ENCODE measurements at regions of chr18 and their contacts with region 1.

Region 1: DNA sequence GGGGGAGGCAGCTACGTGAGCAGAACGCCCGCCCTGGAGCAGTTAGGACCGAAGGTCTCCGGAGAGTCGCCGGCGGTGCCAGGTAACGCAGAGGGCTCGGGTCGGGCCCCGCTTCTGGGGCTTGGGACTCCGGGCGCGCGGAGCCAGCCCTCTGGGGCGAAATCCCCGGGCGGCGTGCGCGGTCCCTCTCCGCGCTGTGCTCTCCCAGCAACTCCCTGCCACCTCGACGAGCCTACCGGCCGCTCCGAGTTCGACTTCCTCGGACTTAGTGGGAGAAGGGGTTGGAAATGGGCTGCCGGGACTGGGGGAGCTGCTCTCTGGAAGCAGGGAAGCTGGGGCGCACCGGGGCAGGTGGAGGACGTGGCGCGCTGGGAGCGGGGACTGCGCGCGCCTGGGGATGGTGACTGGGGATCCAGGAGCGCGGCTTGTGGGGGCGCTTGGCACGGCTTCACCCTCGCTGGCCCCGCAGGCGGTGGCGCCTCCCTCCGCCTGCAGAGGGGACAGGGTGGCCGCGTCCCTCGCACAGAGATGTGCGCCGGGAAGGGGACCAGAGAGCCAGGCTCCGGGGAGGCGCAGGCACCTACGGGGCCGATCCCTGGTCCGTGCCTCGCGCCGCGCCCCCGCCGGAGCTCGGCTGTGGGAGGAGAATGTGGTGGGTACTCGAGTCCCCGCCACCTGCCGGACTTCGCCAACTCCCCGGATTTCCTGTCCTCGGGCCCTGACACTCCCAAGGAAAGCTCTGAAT is 688 bp downstream of the CDH20 start:
- DNase-seq: no peak
- ATAC-seq: peak in 1 of 2 donors; percentile 16
- H3K4me3 ChIP-seq: peak overlapping the region in 3 of 4 donors; percentile 25 to 46 (median 34)
- H3K27ac ChIP-seq: peak overlapping the region in 1 of 4 donors; percentile 69
- H3K4me1 ChIP-seq: no peaks in the 10 kb centered on the region
- H3K27me3 ChIP-seq: peaks cover 13 to 26% (median 22%) of the 10 kb centered on the region in 3 donors
- CTCF ChIP-seq: no peak
- POLR2A ChIP-seq: no peak

Region 2: GRCh38 chr18:61435064-61435652 is 101.2 kb after region 1 on chr18:
- in situ Hi-C with region 1: loop called in 1 of 4 experiments (anchors 25 kb)
- intact Hi-C with region 1: no loop called
- DNase-seq: no peak
- ATAC-seq: no peak
- H3K4me3 ChIP-seq: no peak overlapping the region
- H3K27ac ChIP-seq: no peak overlapping the region
- H3K4me1 ChIP-seq: no peaks in the 10 kb centered on the region
- H3K27me3 ChIP-seq: no peaks in the 10 kb centered on the region
- CTCF ChIP-seq: peak in 1 of 5 experiments; percentile 13
- POLR2A ChIP-seq: no peak

Measured in gastrocnemius medialis (tissue), 4 donors.